ENCODE measurements at regions of chr11 and their contacts with region 1.

Region 1: DNA sequence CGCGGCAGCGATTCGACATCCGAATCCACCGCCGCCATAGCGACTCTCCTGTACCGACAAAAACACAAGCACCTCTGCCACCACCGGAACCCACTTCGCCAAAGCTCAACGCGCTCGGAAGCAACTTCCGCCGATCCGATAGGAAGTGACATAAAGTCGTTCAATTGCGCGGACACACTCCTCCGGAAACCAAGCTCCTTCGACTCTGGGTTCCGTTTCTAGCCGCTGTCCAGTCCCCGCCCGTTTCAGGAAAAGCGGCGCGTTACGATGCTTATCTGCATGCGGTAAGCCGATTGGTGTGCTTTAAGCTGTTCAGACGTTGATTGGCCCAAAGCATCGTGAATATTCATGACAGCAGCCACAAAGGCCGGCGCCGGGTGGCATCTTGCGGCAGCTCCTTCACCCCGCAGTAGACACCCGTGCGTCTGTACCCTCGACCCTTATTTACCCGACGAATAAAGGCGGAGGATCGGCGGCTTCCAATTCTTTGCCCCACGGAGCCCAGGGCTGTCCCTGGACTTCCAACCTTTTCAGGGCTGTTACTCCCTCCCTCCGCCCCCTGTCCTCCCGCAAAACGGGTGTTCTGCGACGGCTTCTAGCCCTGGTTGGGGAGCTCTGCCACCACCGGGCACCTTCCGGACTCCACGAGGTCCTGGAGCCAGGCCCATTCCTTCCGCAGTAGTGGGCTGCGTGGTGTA is at the start of gene TUT1:
- DNase-seq: peak; percentile 99
- ATAC-seq: peak; percentile 90
- H3K4me3 ChIP-seq: peak within 1 kb of the TSS; percentile 78 to 97
- H3K27ac ChIP-seq: peak within 1 kb of the TSS; percentile 77
- H3K4me1 ChIP-seq: peaks cover 21 to 36% of the 10 kb centered on the region in 2 experiments
- H3K27me3 ChIP-seq: no peaks in the 10 kb centered on the region
- CTCF ChIP-seq: no peak
- POLR2A ChIP-seq: peak; percentile 97
- RAD21 ChIP-seq: no peak
- total RNA-seq, gene TUT1: 49.0 TPM

Region 2: DNA sequence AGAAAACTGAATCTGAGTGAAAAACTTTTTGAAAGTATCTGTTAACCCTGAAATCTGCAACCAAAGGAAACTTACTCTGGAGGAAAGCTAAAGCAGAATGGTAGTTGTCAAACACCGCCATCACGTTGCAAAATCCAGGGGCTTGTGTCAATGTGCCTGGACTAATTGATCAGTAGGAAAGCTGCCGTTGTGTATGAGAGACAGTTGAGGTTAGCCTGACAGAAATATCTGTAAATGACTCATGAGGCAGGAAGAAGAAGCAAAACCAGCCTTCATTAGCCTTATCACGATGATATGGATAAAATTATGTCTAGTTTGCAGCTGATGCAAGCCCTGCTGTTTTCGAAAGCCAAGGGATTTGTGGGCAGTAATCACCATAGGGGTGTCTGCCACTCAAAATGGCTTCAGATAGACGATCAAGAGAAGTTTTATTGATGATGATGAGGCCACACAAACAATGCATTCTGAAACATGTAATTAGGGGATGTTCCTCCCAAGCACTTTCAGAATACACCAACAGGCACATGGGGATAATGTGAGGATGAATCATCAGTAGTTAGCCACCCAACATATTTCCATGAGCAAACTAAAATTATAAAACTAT is 163.9 kb before region 1 on chr11:
- CTCF ChIA-PET with region 1: interaction called, 20 read pairs
- POLR2A ChIA-PET with region 1: interaction called, 11 read pairs
- RAD21 ChIA-PET with region 1: no interaction called
- intact Hi-C with region 1: no loop called
- DNase-seq: no peak
- ATAC-seq: no peak
- H3K4me3 ChIP-seq: no peak overlapping the region
- H3K27ac ChIP-seq: no peak overlapping the region
- H3K4me1 ChIP-seq: peaks cover 0 to 29% of the 10 kb centered on the region in 2 experiments; a peak in 2 of 4 replicates
- H3K27me3 ChIP-seq: no peaks in the 10 kb centered on the region
- CTCF ChIP-seq: no peak
- POLR2A ChIP-seq: no peak
- RAD21 ChIP-seq: no peak

Region 3: DNA sequence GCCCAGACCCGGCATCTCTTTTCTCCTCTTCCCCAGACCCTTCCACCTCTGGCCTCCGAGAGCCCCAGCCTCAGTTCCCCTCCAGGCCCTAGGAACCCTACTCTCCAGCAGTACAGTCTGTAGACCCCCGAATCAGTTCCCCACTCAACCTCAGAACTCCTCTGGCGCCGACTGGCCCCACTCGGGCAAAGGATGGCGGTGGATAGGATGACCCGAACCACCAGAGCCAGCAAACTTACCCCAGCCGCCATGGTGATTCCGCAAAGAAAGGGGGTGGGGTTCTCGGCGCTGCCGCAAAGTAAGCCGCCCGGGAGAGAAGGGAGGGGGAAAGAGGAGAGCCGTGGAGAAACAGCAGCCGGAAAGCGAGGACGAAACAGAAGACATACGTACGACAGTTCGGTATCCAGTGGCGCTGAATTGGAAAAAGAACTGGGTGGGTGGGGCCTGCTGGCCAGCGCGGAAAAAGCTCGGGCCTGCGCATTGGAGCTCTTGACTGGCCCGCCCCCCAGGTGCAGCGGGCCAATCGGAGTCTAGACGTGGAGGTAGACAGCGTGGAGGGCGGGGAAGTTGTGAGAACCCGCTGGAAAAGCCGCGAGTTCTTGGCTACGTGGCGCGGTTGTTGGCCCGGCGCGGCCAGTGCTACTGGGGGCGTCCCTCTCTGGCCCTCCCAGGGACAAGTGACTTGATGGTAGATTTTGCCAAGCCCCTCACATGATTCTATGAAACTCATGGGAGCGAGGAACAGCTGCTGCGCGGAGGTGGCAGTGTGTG is 17.8 kb before region 1 on chr11 and contains the start of gene EEF1G:
- CTCF ChIA-PET with region 1: interaction called, 11 read pairs
- POLR2A ChIA-PET with region 1: interaction called, 52 read pairs
- RAD21 ChIA-PET with region 1: interaction called, 3 to 6 read pairs
- intact Hi-C with region 1: no loop called
- DNase-seq: peak; percentile 99
- ATAC-seq: peak; percentile 95
- H3K4me3 ChIP-seq: peak within 1 kb of the TSS; percentile 76 to 99
- H3K27ac ChIP-seq: peak within 1 kb of the TSS; percentile 94
- H3K4me1 ChIP-seq: peaks cover 8 to 30% of the 10 kb centered on the region in 2 experiments
- H3K27me3 ChIP-seq: no peaks in the 10 kb centered on the region
- CTCF ChIP-seq: no peak
- POLR2A ChIP-seq: peak; percentile 79
- RAD21 ChIP-seq: no peak
- total RNA-seq, gene EEF1G: 1,901 TPM

Region 4: DNA sequence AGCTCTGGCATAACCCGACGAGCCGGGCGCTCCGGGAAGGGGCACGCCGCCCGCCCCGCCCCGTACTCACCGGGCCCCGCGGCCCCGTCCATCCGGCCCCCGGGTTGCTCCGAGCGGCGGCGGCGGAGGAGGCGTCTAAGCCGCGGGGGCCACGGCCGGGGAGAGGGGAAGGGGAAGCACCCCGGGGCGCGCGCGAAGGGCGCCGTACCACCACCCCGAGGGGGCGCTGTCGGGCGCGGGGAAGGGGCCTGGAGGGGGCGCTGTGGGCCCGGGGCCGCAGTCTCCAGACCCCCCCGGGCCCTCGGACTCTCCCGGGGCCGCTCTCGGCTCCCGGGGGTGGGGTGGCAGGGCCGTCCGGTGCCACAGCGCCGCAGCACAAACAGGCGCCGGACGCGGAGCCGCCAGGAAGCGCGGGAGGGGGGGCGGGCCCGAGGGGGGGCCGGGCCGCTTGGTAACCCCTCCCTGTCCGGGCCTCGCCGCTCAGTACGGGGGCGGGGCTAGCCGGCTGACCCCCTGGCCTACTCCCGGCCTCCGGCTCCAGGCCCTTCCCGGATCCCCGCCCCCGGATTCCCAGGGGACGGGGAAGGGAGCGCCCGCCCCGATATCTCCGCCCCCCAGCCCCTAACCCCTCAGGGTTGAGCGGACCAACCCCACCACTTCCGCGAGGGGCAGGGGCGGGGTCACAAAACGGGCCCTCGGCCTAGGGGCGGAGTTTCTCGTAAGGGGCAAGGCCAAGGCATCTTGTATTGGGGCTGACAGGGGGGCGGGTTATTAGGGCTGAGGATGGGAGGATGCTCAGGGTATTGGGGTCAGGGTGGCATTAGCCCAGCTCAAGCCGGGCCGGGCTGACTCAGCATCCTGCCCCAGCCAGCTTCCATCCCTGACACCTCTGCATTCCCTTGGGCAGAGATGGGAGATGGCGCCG is 21.0 kb after region 1 on chr11 and contains the starts of genes EML3 and ROM1:
- CTCF ChIA-PET with region 1: interaction called, 11 read pairs
- POLR2A ChIA-PET with region 1: interaction called, 5 read pairs
- RAD21 ChIA-PET with region 1: interaction called in 1 of 2 experiments, 5 read pairs
- intact Hi-C with region 1: no loop called
- DNase-seq: no peak
- ATAC-seq: peak; percentile 79
- H3K4me3 ChIP-seq: peak within 1 kb of the TSS; percentile 87 to 94
- H3K27ac ChIP-seq: peak within 1 kb of the TSS; percentile 83
- H3K4me1 ChIP-seq: peaks cover 28 to 45% of the 10 kb centered on the region in 2 experiments
- H3K27me3 ChIP-seq: no peaks in the 10 kb centered on the region
- CTCF ChIP-seq: peak; percentile 83 to 99 (median 97)
- POLR2A ChIP-seq: no peak
- RAD21 ChIP-seq: peak; percentile 47
- total RNA-seq, gene EML3: 124 TPM
- total RNA-seq, gene ROM1: 2.7 TPM

Region 5: DNA sequence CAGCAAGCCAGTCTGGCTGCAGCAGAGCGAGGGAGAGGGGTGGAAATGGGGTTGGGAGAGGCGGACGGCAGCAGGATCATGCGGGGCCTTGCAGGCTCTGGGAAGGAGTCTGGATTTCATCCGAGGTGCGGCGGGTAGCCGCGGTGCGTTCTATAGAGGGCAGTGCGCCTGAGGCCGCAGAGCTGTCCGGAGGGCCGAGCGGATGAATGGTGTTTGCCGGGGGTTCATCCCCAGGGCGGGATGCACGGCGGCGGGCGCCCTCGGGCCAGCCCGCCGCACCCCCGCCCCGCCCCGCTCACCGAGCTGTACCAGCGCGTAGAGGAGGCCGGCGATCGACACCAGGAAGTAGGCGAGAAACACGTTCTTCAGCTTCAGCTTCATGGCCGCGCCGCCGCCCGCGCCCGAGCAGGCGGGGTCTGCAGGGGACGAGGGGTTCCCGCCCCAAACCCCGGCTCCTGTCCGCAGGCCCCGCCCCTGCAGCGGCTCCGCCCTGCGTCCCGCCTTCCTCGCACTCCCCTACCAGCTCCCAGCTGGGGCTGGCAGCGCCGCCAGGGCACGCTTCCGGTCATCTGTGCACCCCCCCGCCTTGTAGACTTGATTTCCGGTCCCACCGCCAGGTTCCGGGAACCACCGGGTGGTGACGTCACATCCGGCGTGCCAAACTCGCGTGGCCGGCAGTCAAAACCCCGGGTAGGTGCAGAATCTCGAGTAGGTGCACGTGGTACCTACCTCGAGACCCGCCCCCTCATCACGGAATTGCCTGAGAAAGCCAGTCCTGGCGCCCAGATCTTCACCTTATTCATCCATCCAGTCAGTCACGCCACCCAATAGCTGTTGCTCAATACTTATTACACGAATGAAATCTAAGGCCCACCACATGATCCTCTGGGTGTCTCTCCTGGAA is 30.2 kb after region 1 on chr11 and contains the start of gene B3GAT3:
- CTCF ChIA-PET with region 1: interaction called, 15 read pairs
- POLR2A ChIA-PET with region 1: interaction called, 10 read pairs
- RAD21 ChIA-PET with region 1: no interaction called
- intact Hi-C with region 1: no loop called
- DNase-seq: peak; percentile 99
- ATAC-seq: peak; percentile 96
- H3K4me3 ChIP-seq: peak within 1 kb of the TSS; percentile 96 to 98
- H3K27ac ChIP-seq: peak within 1 kb of the TSS; percentile 75
- H3K4me1 ChIP-seq: peaks cover 12 to 20% of the 10 kb centered on the region in 2 experiments
- H3K27me3 ChIP-seq: no peaks in the 10 kb centered on the region
- CTCF ChIP-seq: no peak
- POLR2A ChIP-seq: peak; percentile 55
- RAD21 ChIP-seq: no peak
- total RNA-seq, gene B3GAT3: 51.2 TPM

Region 6: GRCh38 chr11:62652161-62653006 is 60.8 kb after region 1 on chr11:
- CTCF ChIA-PET with region 1: no interaction called
- POLR2A ChIA-PET with region 1: interaction called, 8 read pairs
- RAD21 ChIA-PET with region 1: no interaction called
- intact Hi-C with region 1: loop called (anchors 5 kb)
- DNase-seq: no peak
- ATAC-seq: no peak
- H3K4me3 ChIP-seq: peak overlapping the region; percentile 96 to 98
- H3K27ac ChIP-seq: peak overlapping the region; percentile 84
- H3K4me1 ChIP-seq: peaks cover 7 to 24% of the 10 kb centered on the region in 2 experiments
- H3K27me3 ChIP-seq: no peaks in the 10 kb centered on the region
- CTCF ChIP-seq: no peak
- POLR2A ChIP-seq: no peak
- RAD21 ChIP-seq: no peak

Region 7: DNA sequence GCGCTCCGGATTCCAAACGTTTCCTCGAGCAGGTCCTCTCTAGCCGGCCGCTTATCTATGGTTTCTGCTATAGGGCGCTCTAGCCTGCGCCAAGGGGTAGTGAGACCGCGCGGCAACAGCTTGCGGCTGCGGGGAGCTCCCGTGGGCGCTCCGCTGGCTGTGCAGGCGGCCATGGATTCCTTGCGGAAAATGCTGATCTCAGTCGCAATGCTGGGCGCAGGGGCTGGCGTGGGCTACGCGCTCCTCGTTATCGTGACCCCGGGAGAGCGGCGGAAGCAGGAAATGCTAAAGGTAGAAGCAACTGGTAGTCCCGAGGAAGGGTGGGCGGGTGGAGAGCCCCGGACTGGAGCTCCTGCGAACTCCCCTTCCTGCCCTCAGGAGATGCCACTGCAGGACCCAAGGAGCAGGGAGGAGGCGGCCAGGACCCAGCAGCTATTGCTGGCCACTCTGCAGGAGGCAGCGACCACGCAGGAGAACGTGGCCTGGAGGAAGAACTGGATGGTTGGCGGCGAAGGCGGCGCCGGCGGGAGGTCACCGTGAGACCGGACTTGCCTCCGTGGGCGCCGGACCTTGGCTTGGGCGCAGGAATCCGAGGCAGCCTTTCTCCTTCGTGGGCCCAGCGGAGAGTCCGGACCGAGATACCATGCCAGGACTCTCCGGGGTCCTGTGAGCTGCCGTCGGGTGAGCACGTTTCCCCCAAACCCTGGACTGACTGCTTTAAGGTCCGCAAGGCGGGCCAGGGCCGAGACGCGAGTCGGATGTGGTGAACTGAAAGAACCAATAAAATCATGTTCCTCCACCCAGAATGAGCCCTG is 80.2 kb after region 1 on chr11 and contains the starts of genes LBHD1 and UQCC3:
- CTCF ChIA-PET with region 1: no interaction called
- POLR2A ChIA-PET with region 1: interaction called, 22 read pairs
- RAD21 ChIA-PET with region 1: no interaction called
- intact Hi-C with region 1: loop called (anchors 5 kb)
- DNase-seq: peak; percentile 79
- ATAC-seq: peak; percentile 62
- H3K4me3 ChIP-seq: peak within 1 kb of the TSS; percentile 96 to 97
- H3K27ac ChIP-seq: peak within 1 kb of the TSS; percentile 98
- H3K4me1 ChIP-seq: peaks cover 35 to 59% of the 10 kb centered on the region in 2 experiments
- H3K27me3 ChIP-seq: no peaks in the 10 kb centered on the region
- CTCF ChIP-seq: no peak
- POLR2A ChIP-seq: peak; percentile 63
- RAD21 ChIP-seq: no peak
- total RNA-seq, gene LBHD1: 14.7 TPM
- total RNA-seq, gene UQCC3: 17.9 TPM

Region 8: DNA sequence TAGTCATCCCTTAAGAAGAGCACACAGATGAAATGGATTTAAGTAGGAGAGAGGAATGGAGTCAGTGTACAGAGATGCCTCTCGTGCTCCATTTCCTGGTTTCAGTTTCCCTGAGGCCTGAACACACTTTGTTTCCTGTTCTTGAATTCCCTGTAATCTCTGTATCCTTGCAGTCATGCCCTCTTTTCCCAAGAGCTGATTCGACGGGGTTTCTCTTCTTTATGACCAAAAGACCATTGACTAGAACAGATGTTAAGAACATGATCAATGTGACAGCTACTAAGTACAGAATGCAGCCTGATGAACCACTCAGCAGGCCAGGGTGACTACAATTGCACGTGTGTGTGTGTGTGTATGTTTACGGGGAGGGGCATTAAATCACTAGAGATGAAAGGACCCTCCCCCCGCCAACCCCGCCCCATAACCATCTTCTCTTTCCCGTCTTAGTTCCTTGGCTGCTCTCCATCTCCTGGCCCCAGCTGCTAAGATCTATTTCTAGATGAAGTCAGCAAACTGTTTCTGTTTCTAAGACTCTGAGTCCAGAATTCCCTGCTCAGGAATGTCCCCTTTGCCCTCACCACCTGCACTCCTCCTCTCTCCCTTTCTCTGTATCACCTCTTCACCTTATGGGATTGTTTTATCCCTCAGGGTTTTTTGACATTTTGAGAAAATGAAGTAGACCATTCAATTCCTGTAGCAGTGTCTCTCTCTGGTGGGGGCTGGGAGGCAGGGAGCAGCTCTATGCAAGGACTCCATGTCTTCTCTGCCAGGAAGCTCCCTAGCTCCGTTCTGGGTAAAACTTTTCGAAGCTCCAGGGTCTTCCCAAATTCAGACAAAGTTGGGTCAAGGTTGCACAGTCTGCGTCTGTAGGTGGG is 367.2 kb after region 1 on chr11:
- CTCF ChIA-PET with region 1: no interaction called
- POLR2A ChIA-PET with region 1: no interaction called
- RAD21 ChIA-PET with region 1: no interaction called
- intact Hi-C with region 1: no loop called
- DNase-seq: no peak
- ATAC-seq: no peak
- H3K4me3 ChIP-seq: no peak overlapping the region
- H3K27ac ChIP-seq: no peak overlapping the region
- H3K4me1 ChIP-seq: no peaks in the 10 kb centered on the region
- H3K27me3 ChIP-seq: no peaks in the 10 kb centered on the region
- CTCF ChIP-seq: no peak
- POLR2A ChIP-seq: no peak
- RAD21 ChIP-seq: no peak